Psoas muscle (tissue), 8 donors: ENCODE measurements at regions of chr1 and their contacts with region 1.

Region 1: GRCh38 chr1:16366722-16367257 is at the start of gene SZRD1:
- DNase-seq: peak; percentile 97 to 98
- ATAC-seq: peak; percentile 91 to 94 (median 92)
- H3K4me3 ChIP-seq: peak within 1 kb of the TSS; percentile 88
- H3K27ac ChIP-seq: peak within 1 kb of the TSS; percentile 99
- H3K4me1 ChIP-seq: peaks cover 32% of the 10 kb centered on the region
- H3K27me3 ChIP-seq: no peaks in the 10 kb centered on the region
- CTCF ChIP-seq: no peak
- total RNA-seq, gene SZRD1: 80.7 to 144 (median 138) TPM

Region 2: GRCh38 chr1:16078925-16079656 is 287.7 kb before region 1 on chr1:
- intact Hi-C with region 1: loop called (anchors 2 to 10 kb)
- DNase-seq: peak; percentile 78 to 84
- ATAC-seq: peak; percentile 64 to 76 (median 71)
- H3K4me3 ChIP-seq: no peak overlapping the region
- H3K27ac ChIP-seq: no peak overlapping the region
- H3K4me1 ChIP-seq: no peaks in the 10 kb centered on the region
- H3K27me3 ChIP-seq: peaks cover 0 to under 1% (median 0%) of the 10 kb centered on the region in 3 donors
- CTCF ChIP-seq: peak; percentile 86

Region 3: DNA sequence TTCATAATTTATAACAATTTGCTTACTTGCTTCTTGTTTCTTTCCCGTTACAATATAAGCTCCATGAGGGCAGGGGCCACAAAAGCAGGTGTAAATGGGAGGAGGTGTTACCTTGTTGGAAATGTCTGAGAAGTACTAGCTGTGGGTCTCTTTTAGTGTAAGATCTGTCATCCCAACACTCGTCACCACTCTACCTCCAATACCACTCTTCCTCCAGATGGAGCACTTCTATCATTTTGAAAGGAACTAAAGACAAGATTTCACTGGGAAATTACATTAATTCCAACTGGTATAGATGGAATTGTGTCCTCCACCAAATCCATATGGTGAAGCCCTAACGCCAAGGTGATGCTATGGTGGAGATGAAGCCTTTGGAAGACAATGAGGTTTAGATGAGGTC is 76.8 kb before region 1 on chr1:
- intact Hi-C with region 1: loop called in 1 of 2 experiments (anchors 5 kb)
- DNase-seq: no peak
- ATAC-seq: no peak
- H3K4me3 ChIP-seq: no peak overlapping the region
- H3K27ac ChIP-seq: no peak overlapping the region
- H3K4me1 ChIP-seq: peaks cover 21% of the 10 kb centered on the region
- H3K27me3 ChIP-seq: no peaks in the 10 kb centered on the region
- CTCF ChIP-seq: no peak

Region 4: GRCh38 chr1:16324456-16324890 is 42.3 kb before region 1 on chr1:
- intact Hi-C with region 1: no loop called
- DNase-seq: peak in 1 of 2 donors; percentile 19
- ATAC-seq: peak; percentile 88 to 94 (median 92)
- H3K4me3 ChIP-seq: peak overlapping the region; percentile 37
- H3K27ac ChIP-seq: peak overlapping the region; percentile 62
- H3K4me1 ChIP-seq: peaks cover 41% of the 10 kb centered on the region
- H3K27me3 ChIP-seq: no peaks in the 10 kb centered on the region
- CTCF ChIP-seq: no peak

Region 5: GRCh38 chr1:16351466-16351993 is 15.3 kb before region 1 on chr1:
- intact Hi-C with region 1: no loop called
- DNase-seq: no peak
- ATAC-seq: peak in 1 of 4 donors; percentile 34
- H3K4me3 ChIP-seq: peak overlapping the region; percentile 96
- H3K27ac ChIP-seq: peak overlapping the region; percentile 97
- H3K4me1 ChIP-seq: peaks cover 37% of the 10 kb centered on the region
- H3K27me3 ChIP-seq: no peaks in the 10 kb centered on the region
- CTCF ChIP-seq: no peak

Region 6: GRCh38 chr1:16440470-16441281 is 73.9 kb after region 1 on chr1 and contains the start of gene NECAP2:
- intact Hi-C with region 1: loop called in 1 of 2 experiments (anchors 2 kb)
- DNase-seq: peak; percentile 94 to 97
- ATAC-seq: peak; percentile 96 to 99 (median 98)
- H3K4me3 ChIP-seq: peak within 1 kb of the TSS; percentile 95
- H3K27ac ChIP-seq: peak within 1 kb of the TSS; percentile 87
- H3K4me1 ChIP-seq: peaks cover 25% of the 10 kb centered on the region
- H3K27me3 ChIP-seq: no peaks in the 10 kb centered on the region
- CTCF ChIP-seq: peak; percentile 83
- total RNA-seq, gene NECAP2: 5.7 to 10.6 (median 9.1) TPM